PC-3 (cell line): ENCODE measurements at regions of chr18 and their contacts with region 1.

Region 1: GRCh38 chr18:56291294-56291693 is 347.1 kb downstream of the TXNL1 start:
- DNase-seq: peak; percentile 62
- ATAC-seq: peak; percentile 89
- H3K4me3 ChIP-seq: no peak overlapping the region
- H3K27ac ChIP-seq: no peak overlapping the region
- H3K4me1 ChIP-seq: peaks cover 27% of the 10 kb centered on the region
- H3K27me3 ChIP-seq: no peaks in the 10 kb centered on the region
- CTCF ChIP-seq: no peak

Region 2: DNA sequence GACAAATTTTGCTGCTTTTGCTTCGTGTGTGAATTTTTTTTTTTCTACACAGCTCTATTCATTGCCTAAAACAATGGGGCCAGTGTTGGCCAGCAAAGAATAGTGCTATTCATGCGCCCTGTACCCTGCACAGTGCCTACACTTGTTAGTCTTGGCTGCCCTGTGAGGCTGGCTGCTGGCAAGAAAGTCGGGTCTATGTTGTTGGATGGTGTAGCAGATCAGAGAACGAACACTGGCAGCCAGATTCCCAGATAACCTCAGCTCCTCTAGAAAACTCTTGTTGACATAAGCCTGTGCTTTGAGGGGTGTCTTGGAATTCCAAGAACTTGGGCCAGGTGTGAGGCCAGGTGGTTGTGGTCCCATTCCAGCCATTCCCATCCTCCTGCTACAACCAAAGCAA is 247.6 kb before region 1 on chr18:
- CTCF ChIA-PET with region 1: interaction called, 17 read pairs
- POLR2A ChIA-PET with region 1: no interaction called
- intact Hi-C with region 1: no loop called
- DNase-seq: no peak
- ATAC-seq: no peak
- H3K4me3 ChIP-seq: no peak overlapping the region
- H3K27ac ChIP-seq: no peak overlapping the region
- H3K4me1 ChIP-seq: no peaks in the 10 kb centered on the region
- H3K27me3 ChIP-seq: no peaks in the 10 kb centered on the region
- CTCF ChIP-seq: no peak